Natural killer cell (primary cell): ENCODE measurements at regions of chr18 and their contacts with region 1.

Region 1: DNA sequence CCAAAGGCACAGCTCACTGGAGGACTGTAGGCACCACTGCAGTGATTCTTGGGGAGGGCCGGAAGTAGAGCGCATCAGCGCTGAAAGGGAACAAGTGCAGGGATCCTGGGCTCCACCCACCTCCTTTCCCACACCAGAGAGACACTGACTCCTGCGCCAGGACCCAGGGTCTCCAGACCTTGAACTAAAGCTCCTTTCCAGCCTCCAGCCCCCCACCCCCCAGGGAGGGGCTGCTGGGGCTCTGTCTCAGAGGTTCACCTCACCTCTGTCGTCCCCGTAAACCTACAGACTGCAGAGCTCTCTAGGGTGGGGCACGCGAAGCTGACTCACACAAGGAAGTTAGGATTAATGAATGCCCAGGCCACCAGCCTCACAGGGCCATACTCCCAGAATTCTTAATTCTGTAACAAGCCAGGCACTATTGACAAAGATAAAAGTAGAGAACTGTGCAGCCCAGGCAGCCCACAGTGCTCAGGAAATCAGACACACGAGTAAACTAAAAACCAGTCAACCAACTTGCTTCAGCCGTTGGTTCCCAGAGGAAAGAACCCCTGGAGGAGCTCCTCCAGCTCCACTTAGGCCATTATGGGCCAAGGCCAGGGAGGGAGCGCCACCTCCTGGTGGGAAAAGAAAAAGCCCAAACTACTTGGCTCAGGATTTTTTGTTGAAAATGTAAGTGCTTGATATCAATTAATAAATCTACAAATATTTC is 45.1 kb upstream of the ACAA2 start:
- DNase-seq: peak; percentile 54 to 78
- ATAC-seq: peak in 2 of 3 donors; percentile 63 to 67
- H3K4me3 ChIP-seq: no peak overlapping the region
- H3K4me3 Mint-ChIP-seq: no peak overlapping the region
- H3K27ac ChIP-seq: no peak overlapping the region
- H3K27ac Mint-ChIP-seq: no peak overlapping the region
- H3K4me1 ChIP-seq: peaks cover 6% of the 10 kb centered on the region
- H3K4me1 Mint-ChIP-seq: peaks cover 9 to 12% of the 10 kb centered on the region in 2 donors
- H3K27me3 ChIP-seq: no peaks in the 10 kb centered on the region
- H3K27me3 Mint-ChIP-seq: no peaks in the 10 kb centered on the region
- CTCF ChIP-seq: peak; percentile 94

Region 2: DNA sequence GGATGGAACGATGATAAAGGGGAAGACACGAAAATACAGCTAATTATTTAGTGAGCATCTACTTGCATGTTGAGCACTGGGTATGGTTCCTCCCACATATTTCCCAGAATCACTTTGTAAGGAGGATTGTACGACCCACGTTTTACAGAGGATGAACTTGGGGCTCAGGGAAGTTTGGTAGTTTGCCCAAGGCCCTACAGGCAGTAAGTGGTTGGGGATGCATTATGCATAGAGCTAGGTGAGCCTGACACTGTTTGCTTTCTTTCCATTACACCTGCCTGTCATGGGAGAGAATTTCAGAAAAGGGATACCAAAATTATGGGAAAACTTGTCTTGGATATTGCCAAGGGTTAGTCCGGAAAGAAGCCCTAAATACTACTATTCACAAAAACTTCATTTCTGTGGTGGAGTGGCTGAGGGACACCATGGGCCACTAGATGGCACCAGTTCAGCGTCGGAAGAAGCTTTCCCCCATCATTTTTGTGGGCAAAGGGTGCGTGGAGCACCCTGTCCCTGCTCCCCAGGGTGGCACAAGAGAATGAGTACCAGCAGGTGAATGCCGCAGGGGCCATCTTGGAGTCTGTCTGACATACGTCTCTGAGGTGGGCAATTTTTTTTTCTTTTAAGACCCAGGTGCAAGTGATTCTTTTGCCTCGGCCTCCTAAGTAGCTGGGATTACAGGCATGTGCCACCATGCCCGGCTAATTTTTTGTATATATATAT is 347.9 kb before region 1 on chr18:
- intact Hi-C with region 1: loop called (anchors 1 kb)
- DNase-seq: peak; percentile 43 to 82
- ATAC-seq: peak; percentile 62 to 84 (median 79)
- H3K4me3 ChIP-seq: no peak overlapping the region
- H3K4me3 Mint-ChIP-seq: no peak overlapping the region
- H3K27ac ChIP-seq: no peak overlapping the region
- H3K27ac Mint-ChIP-seq: no peak overlapping the region
- H3K4me1 ChIP-seq: no peaks in the 10 kb centered on the region
- H3K4me1 Mint-ChIP-seq: no peaks in the 10 kb centered on the region
- H3K27me3 ChIP-seq: no peaks in the 10 kb centered on the region
- H3K27me3 Mint-ChIP-seq: peaks cover 14 to 26% of the 10 kb centered on the region in 2 donors
- CTCF ChIP-seq: peak; percentile 80

Region 3: GRCh38 chr18:49561289-49562193 is 296.9 kb before region 1 on chr18 and contains the start of gene LIPG:
- intact Hi-C with region 1: loop called (anchors 1 kb)
- DNase-seq: peak; percentile 37 to 66
- ATAC-seq: peak; percentile 72 to 89 (median 84)
- H3K4me3 ChIP-seq: peak within 1 kb of the TSS; percentile 9
- H3K4me3 Mint-ChIP-seq: peak within 1 kb of the TSS; percentile 88
- H3K27ac ChIP-seq: no peak within 1 kb of the TSS
- H3K27ac Mint-ChIP-seq: peak within 1 kb of the TSS in 1 of 2 donors; percentile 31
- H3K4me1 ChIP-seq: peaks cover 22% of the 10 kb centered on the region
- H3K4me1 Mint-ChIP-seq: peaks cover 24 to 34% of the 10 kb centered on the region in 2 donors
- H3K27me3 ChIP-seq: peaks cover 37% of the 10 kb centered on the region
- H3K27me3 Mint-ChIP-seq: peaks cover 63 to 85% of the 10 kb centered on the region in 2 donors
- CTCF ChIP-seq: no peak
- total RNA-seq, gene LIPG: 0.48 TPM in 1 of 3 donors, not detected in the others

Region 4: DNA sequence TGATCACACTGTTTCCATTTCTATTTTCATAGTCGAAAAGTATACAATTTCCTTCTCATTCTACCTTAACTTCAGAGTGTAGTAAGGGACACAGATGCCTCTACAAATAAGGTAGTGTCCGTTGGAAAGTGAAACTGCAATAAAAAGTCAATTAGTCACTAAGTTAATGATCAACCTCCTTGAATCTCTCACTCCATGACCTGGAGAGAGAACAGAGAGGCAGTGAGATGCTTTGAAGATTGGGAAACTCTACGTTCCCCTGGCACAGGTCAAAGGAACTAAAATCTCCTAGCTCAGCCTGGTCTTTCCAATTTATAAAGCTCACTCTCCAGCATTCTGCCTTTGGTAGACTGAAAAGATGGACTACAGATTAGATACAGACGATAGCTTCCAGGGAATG is 108.7 kb after region 1 on chr18:
- intact Hi-C with region 1: no loop called
- DNase-seq: no peak
- ATAC-seq: no peak
- H3K4me3 ChIP-seq: no peak overlapping the region
- H3K4me3 Mint-ChIP-seq: no peak overlapping the region
- H3K27ac ChIP-seq: no peak overlapping the region
- H3K27ac Mint-ChIP-seq: no peak overlapping the region
- H3K4me1 ChIP-seq: no peaks in the 10 kb centered on the region
- H3K4me1 Mint-ChIP-seq: no peaks in the 10 kb centered on the region
- H3K27me3 ChIP-seq: peaks cover 12% of the 10 kb centered on the region
- H3K27me3 Mint-ChIP-seq: peaks cover 18 to 35% of the 10 kb centered on the region in 2 donors
- CTCF ChIP-seq: no peak